ENCODE measurements at regions of chr4 and their contacts with region 1.

Region 1: GRCh38 chr4:152243896-152244595 is 291.8 kb downstream of the FBXW7 start:
- DNase-seq: no peak

Region 2: DNA sequence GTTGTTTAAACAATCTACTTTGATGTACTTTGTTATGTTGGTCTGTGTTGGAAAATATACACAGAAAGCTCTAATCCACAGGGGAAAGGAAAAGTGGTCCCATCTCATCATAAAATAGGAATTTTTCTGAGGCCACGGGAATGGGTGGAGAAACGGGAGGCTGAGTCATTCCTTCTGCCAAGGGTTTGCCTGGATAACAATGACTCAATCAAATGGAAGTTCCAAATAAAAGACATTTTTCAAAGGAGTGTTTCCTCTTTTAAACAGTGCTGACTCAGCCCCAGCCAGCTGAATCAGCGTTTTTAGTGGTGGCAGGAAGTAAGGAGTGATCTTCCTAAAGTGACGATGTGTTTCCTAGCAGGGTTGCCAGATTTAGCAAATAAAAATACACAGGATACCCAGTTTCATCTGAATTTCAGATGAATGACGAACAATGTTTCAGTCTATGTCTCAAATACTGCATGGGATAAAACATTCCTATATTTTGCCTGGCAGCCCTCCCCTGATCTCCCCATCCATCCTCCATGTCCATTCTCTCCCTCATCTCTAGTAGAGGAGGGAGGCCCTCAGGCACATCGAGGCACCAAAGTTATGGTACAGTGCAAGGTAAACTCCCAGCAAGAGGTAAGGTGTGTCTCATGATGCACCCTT is 137.8 kb before region 1 on chr4:
- intact Hi-C with region 1: loop called (anchors 5 kb)
- DNase-seq: peak; percentile 85

Region 3: DNA sequence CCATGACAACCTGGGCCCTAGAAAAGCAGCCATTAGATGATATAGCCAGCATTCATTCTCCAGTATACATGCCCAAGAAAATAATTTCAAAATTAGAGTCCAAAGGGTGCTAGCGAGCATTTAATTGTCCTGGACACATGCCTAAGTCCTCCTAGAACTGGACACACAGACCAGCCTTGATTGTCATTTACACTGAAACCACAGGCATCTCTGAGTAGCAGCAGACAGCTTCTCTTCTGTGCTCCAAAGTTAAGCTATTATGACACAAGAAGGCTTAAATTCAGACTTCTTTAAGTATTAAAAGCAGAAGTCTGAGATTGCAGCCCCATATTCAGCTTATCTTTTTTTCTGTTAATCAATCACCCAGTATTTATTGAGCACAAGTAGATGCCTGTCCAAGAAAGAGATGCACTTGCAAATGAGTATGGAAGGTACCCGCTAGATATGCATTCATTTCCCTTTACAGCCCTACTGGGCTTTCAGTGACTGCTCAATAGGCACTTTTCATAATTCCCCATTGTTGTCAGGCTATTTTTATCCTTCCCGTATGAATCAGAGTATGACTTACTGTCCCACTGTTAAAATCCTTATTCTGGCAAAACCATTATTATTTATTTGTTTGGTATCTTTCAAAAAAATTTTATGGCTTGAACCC is 82.2 kb before region 1 on chr4:
- intact Hi-C with region 1: loop called (anchors 5 kb)
- DNase-seq: no peak

Region 4: GRCh38 chr4:152209772-152210493 is 34.1 kb before region 1 on chr4:
- intact Hi-C with region 1: loop called (anchors 5 kb)
- DNase-seq: no peak

Measured in cardiac septum (tissue), 1 donor.